Activated CD4-positive, alpha-beta T cell treated with anti-CD3 and anti-CD28 coated beads, Interleukin-2, amount 10 ng/mL, durations not matched to agents 24 days and 14 days (primary cell): ENCODE measurements at regions of chr6 and their contacts with region 1.

Region 1: DNA sequence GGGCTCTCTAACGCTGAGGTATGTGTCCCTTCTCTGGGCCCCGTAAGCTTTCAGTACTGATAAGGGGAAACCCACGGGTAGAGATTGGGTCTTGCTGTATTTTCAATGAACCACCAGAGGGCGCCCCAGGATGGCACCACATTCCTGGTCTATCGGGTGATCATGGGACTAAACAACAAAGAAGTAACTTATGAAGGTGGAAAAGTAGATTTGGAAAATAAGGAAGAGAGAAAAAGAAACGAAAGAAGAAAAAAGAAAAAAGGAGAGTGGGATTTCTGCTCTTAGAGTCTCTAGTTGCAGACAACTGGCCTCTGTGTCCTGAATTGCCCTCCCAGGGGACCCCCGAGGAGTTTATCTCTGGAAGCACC is 93.8 kb downstream of the GMPR start:
- DNase-seq: peak; percentile 94
- H3K4me3 Mint-ChIP-seq: no peak overlapping the region
- H3K27ac Mint-ChIP-seq: no peak overlapping the region
- H3K4me1 Mint-ChIP-seq: peaks cover 3% of the 10 kb centered on the region
- H3K27me3 Mint-ChIP-seq: no peaks in the 10 kb centered on the region

Region 2: DNA sequence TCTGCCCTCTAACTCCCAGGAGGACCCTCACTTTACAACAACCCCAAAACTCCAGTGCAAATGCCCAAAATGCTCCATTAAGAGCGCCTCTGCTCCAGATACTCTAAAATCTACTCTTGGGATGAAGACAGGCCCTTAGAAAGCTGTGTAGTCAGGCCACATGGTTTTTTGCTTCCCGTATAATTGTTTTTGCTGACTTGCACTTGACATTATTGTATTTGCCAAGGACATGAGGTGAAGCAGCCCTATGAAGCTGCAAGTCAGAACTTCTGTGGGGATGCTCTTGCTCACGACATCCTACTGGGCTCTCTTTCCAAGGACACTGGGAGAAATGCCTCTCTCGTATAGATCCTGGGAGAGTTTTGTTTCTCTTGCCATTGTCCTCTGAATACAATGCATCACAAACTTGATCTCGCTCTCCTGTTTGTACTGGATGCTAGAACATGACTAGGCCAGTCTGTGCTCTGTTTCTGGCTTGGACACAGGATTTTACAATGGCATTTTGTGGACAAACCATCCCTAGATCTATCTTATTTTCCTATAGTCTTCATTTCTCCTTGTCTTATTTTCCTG is 492.1 kb before region 1 on chr6:
- intact Hi-C with region 1: no loop called
- DNase-seq: no peak
- H3K4me3 Mint-ChIP-seq: no peak overlapping the region
- H3K27ac Mint-ChIP-seq: no peak overlapping the region
- H3K4me1 Mint-ChIP-seq: no peaks in the 10 kb centered on the region
- H3K27me3 Mint-ChIP-seq: peaks cover 10% of the 10 kb centered on the region

Region 3: GRCh38 chr6:16319813-16320532 is 12.2 kb before region 1 on chr6:
- intact Hi-C with region 1: loop called (anchors 1 kb)
- DNase-seq: peak; percentile 90
- H3K4me3 Mint-ChIP-seq: peak overlapping the region; percentile 73
- H3K27ac Mint-ChIP-seq: peak overlapping the region; percentile 84
- H3K4me1 Mint-ChIP-seq: peaks cover 66% of the 10 kb centered on the region
- H3K27me3 Mint-ChIP-seq: no peaks in the 10 kb centered on the region

Region 4: DNA sequence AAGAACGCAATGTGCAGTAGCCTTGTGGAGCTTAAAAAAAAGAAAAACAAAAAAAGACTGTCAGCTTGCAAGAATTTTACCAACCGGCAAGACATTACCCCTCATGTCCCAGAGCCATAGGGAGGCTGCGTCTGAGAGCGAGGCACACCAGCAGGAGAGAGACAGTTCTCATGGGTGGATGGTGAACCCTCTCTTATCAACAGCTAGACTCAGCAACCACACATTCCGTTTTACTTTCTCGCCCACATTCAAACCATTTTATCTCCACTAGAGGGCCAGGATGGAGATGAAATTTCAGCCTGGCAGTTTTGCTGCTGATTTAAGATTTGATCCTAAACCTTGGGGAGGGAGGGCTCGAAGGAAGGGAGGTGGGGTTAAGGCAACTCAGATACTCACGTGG is 182.1 kb after region 1 on chr6:
- intact Hi-C with region 1: loop called (anchors 2 kb)
- DNase-seq: peak; percentile 82
- H3K4me3 Mint-ChIP-seq: peak overlapping the region; percentile 52
- H3K27ac Mint-ChIP-seq: peak overlapping the region; percentile 84
- H3K4me1 Mint-ChIP-seq: peaks cover 70% of the 10 kb centered on the region
- H3K27me3 Mint-ChIP-seq: no peaks in the 10 kb centered on the region

Region 5: GRCh38 chr6:16770701-16771569 is 438.8 kb after region 1 on chr6:
- intact Hi-C with region 1: loop called (anchors 1 kb)
- DNase-seq: peak; percentile 92
- H3K4me3 Mint-ChIP-seq: peak overlapping the region; percentile 58
- H3K27ac Mint-ChIP-seq: peak overlapping the region; percentile 21
- H3K4me1 Mint-ChIP-seq: peaks cover 49% of the 10 kb centered on the region
- H3K27me3 Mint-ChIP-seq: peaks cover 4% of the 10 kb centered on the region

Region 6: DNA sequence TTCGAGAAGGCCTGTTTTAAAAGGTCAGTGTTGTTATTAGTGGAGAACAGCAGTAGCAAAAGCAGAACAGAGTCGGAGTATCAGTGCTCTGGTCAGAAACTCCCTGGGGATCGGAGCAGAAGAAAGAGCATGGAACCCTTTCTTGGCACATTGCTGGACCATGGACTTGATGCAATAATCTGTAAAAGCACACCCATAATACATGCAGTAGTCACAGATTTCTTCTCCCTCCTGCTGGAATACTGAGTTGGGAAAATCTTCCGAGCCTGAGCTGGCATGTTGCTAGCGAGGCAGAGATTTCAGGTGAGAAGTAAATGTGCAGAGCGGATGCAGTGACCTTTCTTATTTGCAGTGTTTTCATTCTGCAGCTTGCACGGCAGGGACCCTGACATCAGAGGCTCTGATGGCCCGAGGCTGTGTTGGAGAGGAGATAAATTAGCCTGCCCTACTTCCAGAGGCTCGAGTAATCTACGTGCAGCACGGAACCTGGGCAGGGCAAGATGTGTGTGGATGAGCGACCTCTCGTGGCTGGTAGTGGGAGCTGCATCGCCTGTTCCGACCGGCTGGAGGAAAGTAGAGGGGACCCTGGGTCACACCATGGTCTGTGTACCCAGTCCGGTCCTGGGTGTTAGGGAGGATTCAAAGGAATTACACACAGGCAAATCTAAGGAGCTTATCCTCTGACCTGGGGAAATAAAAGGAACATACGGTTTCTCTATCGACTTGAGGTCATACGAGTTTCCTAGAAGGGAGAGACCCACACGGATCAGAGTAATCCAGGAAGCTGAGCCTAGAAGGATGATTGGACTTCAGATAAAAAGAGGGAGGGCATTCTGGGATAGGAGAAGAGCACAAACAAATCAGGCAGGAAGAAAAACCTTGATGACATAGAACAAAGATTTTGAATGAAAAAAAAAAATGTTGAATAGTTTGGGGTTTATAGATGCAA is 632.7 kb after region 1 on chr6:
- intact Hi-C with region 1: loop called (anchors 1 kb)
- DNase-seq: peak; percentile 87
- H3K4me3 Mint-ChIP-seq: no peak overlapping the region
- H3K27ac Mint-ChIP-seq: no peak overlapping the region
- H3K4me1 Mint-ChIP-seq: peaks cover 10% of the 10 kb centered on the region
- H3K27me3 Mint-ChIP-seq: peaks cover 30% of the 10 kb centered on the region